ENCODE measurements at regions of chr10 and their contacts with region 1.

Region 1: DNA sequence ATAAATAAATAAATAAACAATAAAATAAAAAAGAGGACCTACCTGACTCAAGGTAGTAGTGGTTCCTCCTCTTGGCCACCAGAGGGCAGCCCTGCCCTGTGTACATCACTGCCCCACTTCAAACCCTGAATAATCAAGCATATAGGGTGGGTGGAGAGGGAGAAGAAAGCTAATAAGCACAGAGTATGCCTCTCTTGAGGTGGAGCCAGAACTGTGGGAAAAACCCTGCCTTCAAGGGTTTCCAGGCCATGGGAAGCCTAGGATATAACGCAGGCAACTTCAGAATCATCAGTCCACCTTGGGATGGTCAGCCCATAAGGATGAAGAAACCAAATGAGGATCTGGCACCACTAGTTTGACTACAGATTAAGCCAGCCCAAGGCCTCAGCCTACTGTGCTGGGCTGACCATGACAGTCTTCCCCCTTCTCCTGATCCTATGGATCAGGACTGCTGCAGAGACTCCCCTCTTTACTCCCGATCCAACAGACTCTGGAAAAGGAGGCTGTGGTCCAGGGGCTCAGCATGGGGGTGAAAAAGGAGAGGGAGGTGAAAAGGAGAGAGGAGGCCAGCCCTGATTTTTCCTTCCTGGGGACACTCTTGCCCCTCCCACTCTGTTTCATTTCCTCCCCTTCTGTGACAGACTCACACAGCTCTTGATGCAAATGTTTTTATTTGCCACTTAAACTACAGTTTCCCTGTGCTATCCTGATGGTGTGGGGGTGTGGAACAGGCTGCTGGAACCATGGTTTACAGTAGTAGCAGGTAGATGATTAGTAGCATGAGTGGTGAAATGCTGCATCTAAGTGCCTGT is 10.1 kb downstream of the AVPI1 start:
- DNase-seq: peak; percentile 41 to 78
- H3K4me3 ChIP-seq: no peak overlapping the region
- H3K27ac ChIP-seq: peak overlapping the region in 2 of 5 donors; percentile 18 to 26
- H3K4me1 ChIP-seq: peaks cover under 1 to 30% (median 11%) of the 10 kb centered on the region in 4 donors
- H3K27me3 ChIP-seq: no peaks in the 10 kb centered on the region
- CTCF ChIP-seq: peak in 5 of 7 experiments; percentile 80 to 90 (median 84)
- EP300 ChIP-seq: no peak
- POLR2A ChIP-seq: no peak

Region 2: DNA sequence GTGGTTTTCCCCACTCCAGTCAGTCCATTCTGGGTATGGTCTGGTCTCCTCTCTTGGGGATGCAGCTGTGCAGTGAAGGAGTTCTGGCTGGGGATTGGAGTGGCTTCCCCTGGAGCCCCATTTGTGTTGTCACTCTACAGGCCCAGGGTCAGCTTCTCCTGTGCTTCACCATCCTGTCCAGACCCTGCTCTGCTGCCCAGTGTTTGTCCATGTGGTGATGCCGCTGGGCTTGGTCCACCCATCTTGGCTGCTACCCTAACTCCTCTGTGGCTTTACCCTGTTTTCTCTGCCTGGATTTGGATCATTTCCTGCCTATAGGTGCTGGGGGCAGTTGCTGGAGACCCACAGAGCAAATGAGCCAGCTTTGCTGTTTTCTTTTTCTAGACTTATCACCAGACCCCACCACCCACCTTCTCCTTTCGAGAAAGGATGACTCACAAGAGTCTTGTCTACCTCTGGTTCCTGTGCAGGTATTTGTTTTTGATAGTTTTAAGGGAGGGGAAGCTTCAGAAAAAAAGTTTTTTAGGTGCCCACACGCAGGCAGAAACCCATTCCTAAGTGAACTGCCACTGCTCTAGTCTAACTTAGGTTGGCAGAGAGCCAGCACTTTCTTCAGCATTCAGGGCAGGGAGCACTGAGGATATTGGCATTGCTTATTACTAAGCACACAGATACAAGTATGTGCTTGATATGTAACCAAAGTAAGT is 222.5 kb before region 1 on chr10:
- intact Hi-C with region 1: no loop called
- DNase-seq: peak; percentile 55 to 79
- H3K4me3 ChIP-seq: no peak overlapping the region
- H3K27ac ChIP-seq: peak overlapping the region in 3 of 5 donors; percentile 1 to 27 (median 3)
- H3K4me1 ChIP-seq: peaks cover 10 to 49% (median 33%) of the 10 kb centered on the region in 4 donors
- H3K27me3 ChIP-seq: no peaks in the 10 kb centered on the region
- CTCF ChIP-seq: no peak
- EP300 ChIP-seq: no peak
- POLR2A ChIP-seq: no peak

Region 3: GRCh38 chr10:97731346-97732051 is 54.5 kb after region 1 on chr10:
- intact Hi-C with region 1: loop called (anchors 5 kb)
- DNase-seq: peak; percentile 74 to 90
- H3K4me3 ChIP-seq: no peak overlapping the region
- H3K27ac ChIP-seq: no peak overlapping the region
- H3K4me1 ChIP-seq: peaks cover 0 to 15% (median 5%) of the 10 kb centered on the region in 4 donors
- H3K27me3 ChIP-seq: no peaks in the 10 kb centered on the region
- CTCF ChIP-seq: peak in 5 of 7 experiments; percentile 70 to 93 (median 79)
- EP300 ChIP-seq: no peak
- POLR2A ChIP-seq: no peak

Region 4: DNA sequence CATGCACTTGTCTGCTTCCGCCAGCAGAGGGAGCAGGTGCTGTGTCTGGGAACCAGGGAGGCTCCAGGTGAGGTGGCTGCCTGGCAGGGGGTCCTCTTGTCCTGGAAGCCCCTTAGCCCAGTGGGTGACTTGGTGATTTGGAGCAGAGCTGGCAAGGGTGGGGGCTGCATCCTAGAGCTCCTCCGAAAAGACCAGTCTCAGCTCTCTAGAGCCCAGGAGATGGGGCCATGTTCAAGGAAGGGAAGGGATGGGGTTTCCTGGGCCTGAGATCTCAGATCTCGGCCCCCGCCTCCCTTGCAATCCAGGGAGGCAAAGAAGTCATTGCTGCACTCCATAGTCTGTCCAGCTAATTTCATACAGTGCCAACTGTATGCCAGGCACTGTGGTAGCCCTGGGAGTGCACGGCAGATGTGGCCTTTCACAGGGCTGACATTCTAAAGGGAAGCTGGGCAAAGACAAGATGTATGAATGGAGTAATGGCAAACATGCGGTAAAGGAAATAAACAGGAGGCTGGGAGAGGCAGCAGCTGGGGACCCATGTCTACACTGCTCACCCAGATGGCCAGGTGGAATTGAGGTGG is 115.3 kb after region 1 on chr10:
- intact Hi-C with region 1: no loop called
- DNase-seq: peak; percentile 75 to 85
- H3K4me3 ChIP-seq: no peak overlapping the region
- H3K27ac ChIP-seq: no peak overlapping the region
- H3K4me1 ChIP-seq: peaks cover 0 to 21% (median 12%) of the 10 kb centered on the region in 4 donors
- H3K27me3 ChIP-seq: peaks cover 0 to 49% (median 3%) of the 10 kb centered on the region in 3 donors
- CTCF ChIP-seq: peak in 4 of 7 experiments; percentile 72 to 87 (median 78)
- EP300 ChIP-seq: no peak
- POLR2A ChIP-seq: no peak

Region 5: GRCh38 chr10:98202378-98202777 is 525.4 kb after region 1 on chr10:
- intact Hi-C with region 1: no loop called
- DNase-seq: no peak
- H3K4me3 ChIP-seq: no peak overlapping the region
- H3K27ac ChIP-seq: no peak overlapping the region
- H3K4me1 ChIP-seq: peaks cover 0 to 19% (median 4%) of the 10 kb centered on the region in 4 donors
- H3K27me3 ChIP-seq: no peaks in the 10 kb centered on the region
- CTCF ChIP-seq: no peak
- EP300 ChIP-seq: no peak
- POLR2A ChIP-seq: no peak

Measured in stomach (tissue), 19 donors.